Dendritic cell treated with granulocyte-macrophage colony-stimulating factor and Interleukin-4, amounts not matched to agents 40 ng/mL and 50 ng/mL, for 4 days (primary cell): ENCODE measurements at regions of chr2 and their contacts with region 1.

Region 1: GRCh38 chr2:3379647-3380534 is at the start of gene TRAPPC12:
- H3K4me3 Mint-ChIP-seq: peak within 1 kb of the TSS; percentile 98
- H3K27ac Mint-ChIP-seq: peak within 1 kb of the TSS; percentile 97
- H3K4me1 Mint-ChIP-seq: peaks cover 38% of the 10 kb centered on the region
- H3K27me3 Mint-ChIP-seq: no peaks in the 10 kb centered on the region

Region 2: DNA sequence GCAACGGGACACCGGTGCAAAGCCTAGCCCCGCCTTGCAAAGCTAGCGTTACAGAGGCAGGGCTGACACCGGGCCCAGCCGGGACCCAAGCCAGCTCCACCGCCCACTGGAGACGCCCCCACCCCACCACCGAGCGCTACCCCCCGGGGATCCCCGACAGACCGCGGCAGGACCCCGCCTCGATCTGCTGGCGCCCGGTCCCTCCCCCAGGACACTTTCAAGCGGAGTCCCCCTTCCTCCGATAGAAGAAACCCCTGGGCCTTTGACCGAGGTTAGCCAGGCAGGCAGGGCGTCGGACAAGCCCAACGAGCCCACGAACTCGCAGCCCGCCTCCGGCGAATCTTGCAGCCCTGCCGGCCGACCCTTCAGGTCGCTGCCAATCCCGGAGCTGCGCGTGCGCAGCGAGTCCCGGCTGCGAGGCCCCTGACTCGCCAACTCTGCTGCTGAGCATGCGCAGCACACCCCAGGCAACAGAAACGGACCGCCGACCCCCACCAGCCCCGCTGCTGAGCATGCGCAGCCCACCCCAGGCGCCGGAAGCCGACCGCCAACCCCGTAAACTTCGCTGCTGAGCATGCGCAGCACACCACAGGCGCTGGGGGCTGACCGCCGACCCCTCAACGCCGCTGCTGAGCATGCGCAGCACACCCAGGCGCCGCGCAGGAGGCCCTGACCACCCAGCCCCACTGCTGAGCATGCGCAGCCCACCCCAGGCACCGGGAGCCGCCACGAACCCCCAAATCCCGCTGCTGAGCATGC is 138.8 kb after region 1 on chr2:
- intact Hi-C with region 1: loop called (anchors 5 kb)
- H3K4me3 Mint-ChIP-seq: peak overlapping the region; percentile 94
- H3K27ac Mint-ChIP-seq: peak overlapping the region; percentile 95
- H3K4me1 Mint-ChIP-seq: peaks cover 37% of the 10 kb centered on the region
- H3K27me3 Mint-ChIP-seq: no peaks in the 10 kb centered on the region

Region 3: GRCh38 chr2:3558205-3559014 is 178.5 kb after region 1 on chr2 and contains the start of gene RNASEH1:
- intact Hi-C with region 1: loop called (anchors 1 kb)
- H3K4me3 Mint-ChIP-seq: peak within 1 kb of the TSS; percentile 86
- H3K27ac Mint-ChIP-seq: peak within 1 kb of the TSS; percentile 95
- H3K4me1 Mint-ChIP-seq: peaks cover 9% of the 10 kb centered on the region
- H3K27me3 Mint-ChIP-seq: no peaks in the 10 kb centered on the region